ENCODE measurements at regions of chr7 and their contacts with region 1.

Region 1: GRCh38 chr7:105691733-105692564 is 110.7 kb upstream of the EFCAB10 start:
- DNase-seq: peak; percentile 79
- H3K4me3 Mint-ChIP-seq: peak overlapping the region; percentile 74
- H3K27ac Mint-ChIP-seq: peak overlapping the region; percentile 92
- H3K4me1 Mint-ChIP-seq: peaks cover 37% of the 10 kb centered on the region
- H3K27me3 Mint-ChIP-seq: no peaks in the 10 kb centered on the region

Region 2: DNA sequence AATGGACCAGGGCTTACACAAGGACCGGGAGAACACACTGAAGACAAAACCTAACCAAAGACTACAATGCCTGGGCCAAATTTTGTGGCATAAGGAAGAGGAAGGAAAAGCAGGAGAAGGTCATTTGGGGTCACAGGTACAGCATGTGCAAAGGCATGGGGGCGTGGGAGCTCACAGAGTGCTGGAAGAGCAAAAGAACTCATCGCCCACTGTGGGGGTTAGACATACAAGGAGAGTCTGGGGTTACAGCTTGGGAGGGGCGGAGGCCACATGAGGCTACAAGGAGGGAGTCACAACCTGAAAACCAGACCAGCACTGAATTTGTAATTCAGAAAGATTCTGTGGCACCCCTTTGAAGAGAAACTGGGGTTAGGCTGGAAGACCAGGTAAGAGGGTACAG is 179.5 kb before region 1 on chr7:
- CTCF ChIA-PET with region 1: no interaction called
- POLR2A ChIA-PET with region 1: no interaction called
- DNase-seq: no peak
- H3K4me3 Mint-ChIP-seq: no peak overlapping the region
- H3K27ac Mint-ChIP-seq: no peak overlapping the region
- H3K4me1 Mint-ChIP-seq: peaks cover 19% of the 10 kb centered on the region
- H3K27me3 Mint-ChIP-seq: no peaks in the 10 kb centered on the region

Region 3: GRCh38 chr7:105621617-105622016 is 70.3 kb before region 1 on chr7:
- CTCF ChIA-PET with region 1: no interaction called
- POLR2A ChIA-PET with region 1: no interaction called
- DNase-seq: no peak
- H3K4me3 Mint-ChIP-seq: no peak overlapping the region
- H3K27ac Mint-ChIP-seq: no peak overlapping the region
- H3K4me1 Mint-ChIP-seq: no peaks in the 10 kb centered on the region
- H3K27me3 Mint-ChIP-seq: no peaks in the 10 kb centered on the region

Region 4: DNA sequence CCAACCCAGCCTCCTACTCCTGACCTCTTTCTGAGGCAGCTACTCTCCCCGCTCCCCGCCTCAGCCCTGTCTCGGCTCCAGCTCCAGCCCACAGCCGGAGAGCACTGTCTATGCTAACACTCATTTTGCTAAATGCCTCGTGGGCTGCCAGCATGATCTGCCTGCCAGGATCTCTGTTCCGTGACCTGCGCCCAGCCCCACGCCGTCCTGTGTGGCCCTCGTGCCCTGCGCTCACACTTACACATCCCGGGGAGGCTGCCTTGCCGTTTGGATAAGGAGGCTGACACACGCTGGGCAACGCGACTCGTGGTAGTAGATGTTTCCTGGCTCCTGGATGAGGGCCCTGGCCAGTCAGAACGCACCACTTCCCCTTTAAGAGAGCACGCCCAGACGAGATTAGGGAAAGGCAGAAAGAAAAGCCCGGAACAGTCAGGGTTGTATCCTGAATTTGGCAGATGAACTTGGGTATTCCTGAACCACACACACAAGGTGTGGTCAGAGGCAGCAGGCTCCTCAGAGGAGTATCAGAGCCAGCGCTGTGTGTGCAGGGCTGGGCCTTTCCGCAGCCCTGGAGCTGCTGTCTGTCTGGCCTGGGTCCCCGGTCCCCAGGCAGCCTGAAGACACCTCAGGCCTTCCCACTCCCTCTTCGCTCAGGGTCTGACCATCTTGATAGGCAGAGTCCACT is 13.0 kb before region 1 on chr7:
- CTCF ChIA-PET with region 1: interaction called, 8 read pairs
- POLR2A ChIA-PET with region 1: interaction called, 129 read pairs
- DNase-seq: peak; percentile 35
- H3K4me3 Mint-ChIP-seq: peak overlapping the region; percentile 81
- H3K27ac Mint-ChIP-seq: peak overlapping the region; percentile 92
- H3K4me1 Mint-ChIP-seq: peaks cover 57% of the 10 kb centered on the region
- H3K27me3 Mint-ChIP-seq: no peaks in the 10 kb centered on the region

Region 5: DNA sequence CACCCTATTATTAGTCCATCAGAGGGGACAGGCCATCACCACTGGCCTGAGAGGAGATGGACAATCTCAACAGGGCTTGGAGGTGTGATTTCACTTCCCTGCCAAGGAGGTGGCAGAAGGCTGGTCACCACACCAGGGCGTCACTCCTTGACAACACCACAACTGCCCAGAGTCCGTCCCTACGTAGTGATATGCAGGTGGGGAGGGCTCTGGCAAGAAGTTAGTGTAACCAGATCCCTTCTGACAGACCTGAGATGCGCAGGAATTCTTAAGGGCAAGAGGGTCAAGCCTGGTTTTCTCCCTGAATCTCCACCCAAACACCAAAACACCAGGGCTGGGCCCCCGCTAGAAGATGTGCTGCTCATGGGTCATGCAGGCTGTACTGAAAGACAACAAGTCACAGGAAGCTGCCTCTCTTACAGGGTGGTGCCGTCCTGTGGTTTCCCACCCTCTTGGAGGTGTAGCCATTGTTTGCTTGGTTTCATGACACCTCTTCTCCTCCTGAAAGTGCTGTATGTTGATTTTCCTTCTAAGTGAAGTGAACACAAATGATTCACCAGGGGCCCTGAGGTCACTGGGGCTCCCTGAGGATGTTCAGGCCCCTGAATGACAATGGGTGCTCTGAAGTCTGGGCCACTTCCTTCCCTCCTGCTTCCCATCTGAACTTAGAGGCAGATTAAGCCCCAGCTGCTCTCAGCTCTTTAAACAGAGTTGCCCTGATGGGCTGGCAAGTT is 157.3 kb after region 1 on chr7:
- CTCF ChIA-PET with region 1: no interaction called
- POLR2A ChIA-PET with region 1: interaction called, 12 read pairs
- DNase-seq: peak; percentile 86
- H3K4me3 Mint-ChIP-seq: peak overlapping the region; percentile 56
- H3K27ac Mint-ChIP-seq: peak overlapping the region; percentile 85
- H3K4me1 Mint-ChIP-seq: peaks cover 65% of the 10 kb centered on the region
- H3K27me3 Mint-ChIP-seq: no peaks in the 10 kb centered on the region

Measured in activated CD4-positive, alpha-beta memory T cell treated with anti-CD3 and anti-CD28 coated beads, Interleukin-2, amount 10 ng/mL, durations not matched to agents 7 days and 5 days (primary cell).